Activated CD4-positive, alpha-beta memory T cell treated with anti-CD3 and anti-CD28 coated beads for 36 hours (primary cell): ENCODE measurements at regions of chr10 and their contacts with region 1.

Region 1: GRCh38 chr10:111076191-111076681 is 593 bp upstream of the ADRA2A start:
- DNase-seq: peak; percentile 70
- H3K4me3 Mint-ChIP-seq: peak overlapping the region; percentile 65
- H3K27ac Mint-ChIP-seq: no peak overlapping the region
- H3K4me1 Mint-ChIP-seq: peaks cover 11% of the 10 kb centered on the region
- H3K27me3 Mint-ChIP-seq: peaks cover 56% of the 10 kb centered on the region

Region 2: DNA sequence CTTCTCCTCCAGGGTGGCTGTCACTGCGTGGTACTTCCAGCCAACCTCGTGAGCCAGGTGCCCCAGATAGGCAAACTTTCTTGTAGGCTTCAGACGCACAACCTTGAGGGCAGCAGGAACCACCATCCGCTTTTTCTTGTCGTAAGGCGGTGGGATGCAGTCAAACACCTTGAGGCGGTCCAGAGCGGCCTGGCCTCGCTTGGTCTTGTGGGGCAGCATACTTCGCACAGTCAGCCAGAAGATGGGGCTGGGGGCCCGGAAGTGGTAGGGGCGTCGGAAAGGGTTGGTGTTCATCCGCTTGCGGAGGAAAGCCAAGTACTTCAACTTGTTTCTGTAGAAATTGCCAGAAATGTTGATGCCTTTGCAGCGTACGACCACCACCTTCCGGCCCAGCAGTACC is 139.5 kb before region 1 on chr10:
- CTCF ChIA-PET with region 1: no interaction called
- POLR2A ChIA-PET with region 1: no interaction called
- intact Hi-C with region 1: no loop called
- DNase-seq: no peak
- H3K4me3 Mint-ChIP-seq: no peak overlapping the region
- H3K27ac Mint-ChIP-seq: no peak overlapping the region
- H3K4me1 Mint-ChIP-seq: peaks cover 24% of the 10 kb centered on the region
- H3K27me3 Mint-ChIP-seq: no peaks in the 10 kb centered on the region

Region 3: GRCh38 chr10:111207500-111207899 is 131.3 kb after region 1 on chr10:
- CTCF ChIA-PET with region 1: interaction called, 6 read pairs
- POLR2A ChIA-PET with region 1: no interaction called
- intact Hi-C with region 1: loop called (anchors 2 kb)
- DNase-seq: peak; percentile 48
- H3K4me3 Mint-ChIP-seq: no peak overlapping the region
- H3K27ac Mint-ChIP-seq: no peak overlapping the region
- H3K4me1 Mint-ChIP-seq: no peaks in the 10 kb centered on the region
- H3K27me3 Mint-ChIP-seq: peaks cover 5% of the 10 kb centered on the region